CD4-positive, alpha-beta T cell (primary cell): ENCODE measurements at regions of chr3 and their contacts with region 1.

Region 1: DNA sequence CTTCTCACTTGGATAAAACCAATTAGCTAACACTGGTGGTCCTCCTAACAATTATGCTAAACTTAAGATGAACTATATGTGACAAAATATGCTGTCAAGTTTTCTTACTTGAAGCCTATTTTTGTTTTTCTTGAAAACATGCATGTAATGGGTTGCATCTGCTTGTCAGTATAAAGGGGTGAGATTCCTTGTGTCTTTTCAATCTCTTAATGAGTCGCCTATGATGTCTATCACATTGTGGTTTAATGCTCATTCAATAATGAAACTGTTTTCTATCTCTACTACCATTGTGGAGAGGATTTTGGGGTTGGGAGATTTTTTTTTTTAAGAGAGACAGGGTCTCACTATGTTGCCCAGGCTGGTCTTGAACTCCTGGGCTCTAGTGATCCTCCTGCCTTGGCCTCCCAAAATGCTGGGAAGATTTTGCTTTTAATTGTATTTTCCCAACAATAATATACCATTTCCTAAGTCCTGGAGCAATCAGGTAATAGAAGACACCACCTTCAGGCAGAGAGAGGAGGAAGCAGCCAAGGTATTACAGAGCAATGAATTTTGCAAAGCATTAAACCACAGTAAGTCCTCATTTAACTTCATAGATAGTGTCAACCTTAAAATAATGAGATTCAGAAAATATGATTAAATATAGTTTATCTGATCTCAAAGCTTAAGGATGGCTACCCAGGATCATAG is 17.4 kb upstream of the TRMT10C start:
- DNase-seq: peak in 1 of 14 experiments; percentile 20
- ATAC-seq: peak; percentile 53
- H3K4me3 ChIP-seq: no peak overlapping the region
- H3K4me3 Mint-ChIP-seq: peak overlapping the region; percentile 38
- H3K27ac ChIP-seq: peak overlapping the region in 1 of 2 donors; percentile 35
- H3K27ac Mint-ChIP-seq: peak overlapping the region; percentile 93
- H3K4me1 ChIP-seq: peaks cover 19% of the 10 kb centered on the region
- H3K4me1 Mint-ChIP-seq: peaks cover 47% of the 10 kb centered on the region
- H3K27me3 ChIP-seq: no peaks in the 10 kb centered on the region
- H3K27me3 Mint-ChIP-seq: no peaks in the 10 kb centered on the region
- CTCF ChIP-seq: peak; percentile 50

Region 2: GRCh38 chr3:101495552-101495951 is 48.8 kb before region 1 on chr3:
- CTCF ChIA-PET with region 1: no interaction called
- POLR2A ChIA-PET with region 1: no interaction called
- intact Hi-C with region 1: no loop called
- DNase-seq: no peak
- ATAC-seq: no peak
- H3K4me3 ChIP-seq: no peak overlapping the region
- H3K4me3 Mint-ChIP-seq: no peak overlapping the region
- H3K27ac ChIP-seq: no peak overlapping the region
- H3K27ac Mint-ChIP-seq: peak overlapping the region; percentile 40
- H3K4me1 ChIP-seq: peaks cover 3% of the 10 kb centered on the region
- H3K4me1 Mint-ChIP-seq: peaks cover 68% of the 10 kb centered on the region
- H3K27me3 ChIP-seq: no peaks in the 10 kb centered on the region
- H3K27me3 Mint-ChIP-seq: no peaks in the 10 kb centered on the region
- CTCF ChIP-seq: no peak

Region 3: DNA sequence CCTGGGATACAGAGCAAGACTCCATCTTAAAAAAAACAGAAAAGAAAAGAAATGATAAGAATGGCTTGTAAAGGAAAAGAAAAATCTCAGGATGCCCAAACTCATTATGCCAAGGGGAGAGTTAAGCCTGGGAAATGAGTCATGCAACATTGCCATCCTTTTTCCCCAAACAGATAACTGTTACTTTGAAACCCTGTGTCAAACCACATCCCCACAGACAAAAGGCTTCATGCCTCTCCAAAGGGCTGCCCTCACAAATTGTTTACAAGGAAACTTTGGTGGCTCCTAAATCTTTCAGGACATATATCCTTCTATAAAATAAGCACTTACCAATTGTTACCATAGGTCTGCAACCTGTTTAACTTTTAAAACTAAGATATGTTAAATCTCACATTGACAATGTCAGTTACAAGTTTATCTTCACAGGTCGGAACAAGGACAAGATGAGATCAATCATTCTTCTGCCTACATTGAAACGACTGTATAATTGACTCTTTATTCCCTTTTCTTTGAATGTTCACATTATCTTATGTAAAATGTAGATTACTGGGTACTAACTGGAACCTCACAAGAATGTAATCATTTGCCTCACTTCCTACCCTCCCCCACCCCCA is 12.7 kb before region 1 on chr3:
- CTCF ChIA-PET with region 1: no interaction called
- POLR2A ChIA-PET with region 1: interaction called, 13 read pairs
- intact Hi-C with region 1: loop called in 1 of 2 experiments (anchors 2 kb)
- DNase-seq: peak in 3 of 14 experiments; percentile 39 to 56 (median 49)
- ATAC-seq: peak; percentile 71
- H3K4me3 ChIP-seq: no peak overlapping the region
- H3K4me3 Mint-ChIP-seq: peak overlapping the region; percentile 4
- H3K27ac ChIP-seq: peak overlapping the region in 1 of 2 donors; percentile 61
- H3K27ac Mint-ChIP-seq: peak overlapping the region; percentile 85
- H3K4me1 ChIP-seq: peaks cover 22% of the 10 kb centered on the region
- H3K4me1 Mint-ChIP-seq: peaks cover 52% of the 10 kb centered on the region
- H3K27me3 ChIP-seq: no peaks in the 10 kb centered on the region
- H3K27me3 Mint-ChIP-seq: no peaks in the 10 kb centered on the region
- CTCF ChIP-seq: no peak

Region 4: GRCh38 chr3:101561630-101562328 is 17.5 kb after region 1 on chr3 and contains the start of gene TRMT10C:
- CTCF ChIA-PET with region 1: no interaction called
- POLR2A ChIA-PET with region 1: interaction called, 11 read pairs
- intact Hi-C with region 1: no loop called
- DNase-seq: peak; percentile 87 to 97 (median 91)
- ATAC-seq: peak; percentile 94
- H3K4me3 ChIP-seq: peak within 1 kb of the TSS; percentile 93
- H3K4me3 Mint-ChIP-seq: peak within 1 kb of the TSS; percentile 97
- H3K27ac ChIP-seq: peak within 1 kb of the TSS; percentile 81 to 89
- H3K27ac Mint-ChIP-seq: peak within 1 kb of the TSS; percentile 99
- H3K4me1 ChIP-seq: peaks cover 14% of the 10 kb centered on the region
- H3K4me1 Mint-ChIP-seq: peaks cover 50% of the 10 kb centered on the region
- H3K27me3 ChIP-seq: peaks cover 0 to 2% of the 10 kb centered on the region in 2 experiments
- H3K27me3 Mint-ChIP-seq: peaks cover under 1% of the 10 kb centered on the region
- CTCF ChIP-seq: no peak
- total RNA-seq, gene TRMT10C: 49.4 to 51.2 TPM

Region 5: GRCh38 chr3:101635954-101636798 is 91.9 kb after region 1 on chr3:
- CTCF ChIA-PET with region 1: no interaction called
- POLR2A ChIA-PET with region 1: no interaction called
- intact Hi-C with region 1: no loop called
- DNase-seq: peak; percentile 58 to 75 (median 66)
- ATAC-seq: peak; percentile 94
- H3K4me3 ChIP-seq: no peak overlapping the region
- H3K4me3 Mint-ChIP-seq: no peak overlapping the region
- H3K27ac ChIP-seq: no peak overlapping the region
- H3K27ac Mint-ChIP-seq: no peak overlapping the region
- H3K4me1 ChIP-seq: peaks cover 6% of the 10 kb centered on the region
- H3K4me1 Mint-ChIP-seq: peaks cover 6% of the 10 kb centered on the region
- H3K27me3 ChIP-seq: no peaks in the 10 kb centered on the region
- H3K27me3 Mint-ChIP-seq: no peaks in the 10 kb centered on the region
- CTCF ChIP-seq: peak; percentile 61

Region 6: GRCh38 chr3:101665851-101666250 is 121.5 kb after region 1 on chr3:
- CTCF ChIA-PET with region 1: no interaction called
- POLR2A ChIA-PET with region 1: no interaction called
- intact Hi-C with region 1: no loop called
- DNase-seq: no peak
- ATAC-seq: no peak
- H3K4me3 ChIP-seq: no peak overlapping the region
- H3K4me3 Mint-ChIP-seq: no peak overlapping the region
- H3K27ac ChIP-seq: no peak overlapping the region
- H3K27ac Mint-ChIP-seq: no peak overlapping the region
- H3K4me1 ChIP-seq: no peaks in the 10 kb centered on the region
- H3K4me1 Mint-ChIP-seq: peaks cover 2% of the 10 kb centered on the region
- H3K27me3 ChIP-seq: no peaks in the 10 kb centered on the region
- H3K27me3 Mint-ChIP-seq: no peaks in the 10 kb centered on the region
- CTCF ChIP-seq: no peak

Region 7: GRCh38 chr3:101890716-101891115 is 346.4 kb after region 1 on chr3:
- CTCF ChIA-PET with region 1: no interaction called
- POLR2A ChIA-PET with region 1: no interaction called
- intact Hi-C with region 1: no loop called
- DNase-seq: no peak
- ATAC-seq: no peak
- H3K4me3 ChIP-seq: no peak overlapping the region
- H3K4me3 Mint-ChIP-seq: no peak overlapping the region
- H3K27ac ChIP-seq: no peak overlapping the region
- H3K27ac Mint-ChIP-seq: no peak overlapping the region
- H3K4me1 ChIP-seq: no peaks in the 10 kb centered on the region
- H3K4me1 Mint-ChIP-seq: no peaks in the 10 kb centered on the region
- H3K27me3 ChIP-seq: no peaks in the 10 kb centered on the region
- H3K27me3 Mint-ChIP-seq: no peaks in the 10 kb centered on the region
- CTCF ChIP-seq: no peak